Activated CD4-positive, alpha-beta T cell treated with anti-CD3 and anti-CD28 coated beads for 36 hours (primary cell): ENCODE measurements at regions of chr15 and their contacts with region 1.

Region 1: GRCh38 chr15:83011271-83012075 is at the start of gene C15orf40:
- DNase-seq: peak; percentile 88
- ATAC-seq: peak; percentile 81
- H3K4me3 Mint-ChIP-seq: peak within 1 kb of the TSS; percentile 89
- H3K27ac Mint-ChIP-seq: peak within 1 kb of the TSS; percentile 96
- H3K4me1 Mint-ChIP-seq: peaks cover 48% of the 10 kb centered on the region
- H3K27me3 Mint-ChIP-seq: no peaks in the 10 kb centered on the region
- total RNA-seq, gene C15orf40: 20.2 to 23.1 TPM

Region 2: DNA sequence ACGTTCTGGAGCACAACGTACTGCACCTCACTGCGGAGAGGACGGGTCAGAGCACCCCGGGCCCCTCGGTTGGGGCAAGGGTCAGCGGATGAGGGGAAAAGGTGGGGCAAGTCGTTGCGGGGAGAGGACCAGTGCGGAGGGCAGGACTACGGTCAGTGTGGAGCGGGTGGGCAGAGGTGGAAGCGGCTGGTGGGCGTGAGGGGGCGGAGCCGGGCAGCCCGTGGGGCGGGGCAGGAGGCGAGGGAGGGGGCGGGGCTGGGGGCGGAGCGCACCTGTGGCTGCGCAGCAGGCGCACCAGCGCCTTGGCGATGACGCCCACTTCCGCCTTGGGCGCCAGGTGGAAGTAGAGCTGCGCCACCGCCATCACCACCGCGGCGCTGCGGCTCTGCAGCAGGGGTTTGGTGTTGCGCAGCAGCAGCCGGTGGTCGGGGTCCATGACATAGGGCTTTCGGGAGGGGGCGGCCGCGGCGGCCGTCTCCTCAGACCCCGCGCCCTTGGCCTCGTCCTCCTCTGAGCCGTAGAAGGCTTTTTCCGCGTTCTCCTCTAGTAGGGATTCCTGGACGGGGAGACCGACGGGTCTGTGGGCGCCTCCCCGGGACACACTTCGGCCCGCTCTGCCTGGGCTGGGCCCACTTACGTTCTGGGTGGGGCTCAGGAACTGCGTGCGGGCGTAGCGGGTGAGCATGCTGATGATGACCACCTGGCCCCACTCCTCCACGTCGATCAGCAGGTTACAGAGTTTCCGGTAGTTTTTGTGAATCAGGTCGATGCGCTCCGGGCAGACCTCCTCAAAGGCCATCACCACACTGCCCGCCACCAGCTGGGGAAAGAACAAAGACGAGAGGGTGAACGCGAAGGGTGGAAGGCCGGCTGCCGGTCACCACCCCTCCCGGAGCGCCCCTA is 331.0 kb before region 1 on chr15:
- CTCF ChIA-PET with region 1: no interaction called
- POLR2A ChIA-PET with region 1: no interaction called
- intact Hi-C with region 1: loop called in 1 of 2 experiments (anchors 5 kb)
- DNase-seq: peak; percentile 90
- ATAC-seq: peak; percentile 96
- H3K4me3 Mint-ChIP-seq: peak overlapping the region; percentile 80
- H3K27ac Mint-ChIP-seq: peak overlapping the region; percentile 85
- H3K4me1 Mint-ChIP-seq: peaks cover 10% of the 10 kb centered on the region
- H3K27me3 Mint-ChIP-seq: peaks cover 7% of the 10 kb centered on the region

Region 3: GRCh38 chr15:82749951-82750830 is 261.3 kb before region 1 on chr15:
- CTCF ChIA-PET with region 1: interaction called, 10 read pairs
- POLR2A ChIA-PET with region 1: no interaction called
- intact Hi-C with region 1: loop called in 1 of 2 experiments (anchors 2 kb)
- DNase-seq: peak; percentile 91
- ATAC-seq: peak; percentile 95
- H3K4me3 Mint-ChIP-seq: peak overlapping the region; percentile 86
- H3K27ac Mint-ChIP-seq: peak overlapping the region; percentile 98
- H3K4me1 Mint-ChIP-seq: peaks cover 44% of the 10 kb centered on the region
- H3K27me3 Mint-ChIP-seq: no peaks in the 10 kb centered on the region

Region 4: DNA sequence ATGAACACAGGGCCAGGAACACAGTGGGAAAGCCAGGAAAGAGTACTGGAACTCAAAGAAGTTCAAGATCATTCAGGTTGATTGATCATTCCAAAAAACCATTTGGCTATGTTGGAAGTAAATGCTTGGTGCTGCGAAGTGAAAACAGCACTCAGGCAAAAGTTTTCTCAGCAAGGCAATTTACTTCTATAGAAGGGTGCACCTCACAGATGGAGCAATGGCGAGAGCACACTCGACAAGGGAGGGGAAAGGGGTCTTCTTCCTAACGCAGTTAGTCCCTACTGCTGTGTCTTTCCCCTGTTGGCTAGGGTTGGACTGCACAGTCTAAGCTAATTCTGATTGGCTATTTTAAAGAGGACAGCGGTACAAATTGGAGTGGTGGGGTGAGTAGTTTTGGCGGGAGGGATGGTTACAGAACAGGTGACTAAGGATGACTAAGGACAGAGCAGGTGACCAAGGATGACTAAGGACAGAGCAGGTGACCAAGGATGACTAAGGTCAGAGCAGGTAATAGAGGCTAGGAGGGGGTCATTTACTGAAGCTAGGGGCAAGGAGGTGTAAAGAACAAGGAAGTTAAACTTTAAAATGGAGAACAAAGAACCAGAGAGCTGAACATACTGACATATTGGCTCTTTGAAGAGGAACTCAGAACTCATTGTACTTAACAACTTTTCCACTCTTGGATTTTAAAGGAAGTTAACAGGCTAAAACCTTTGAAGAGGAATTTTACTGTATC is 102.2 kb before region 1 on chr15:
- CTCF ChIA-PET with region 1: no interaction called
- POLR2A ChIA-PET with region 1: no interaction called
- intact Hi-C with region 1: no loop called
- DNase-seq: no peak
- ATAC-seq: no peak
- H3K4me3 Mint-ChIP-seq: no peak overlapping the region
- H3K27ac Mint-ChIP-seq: no peak overlapping the region
- H3K4me1 Mint-ChIP-seq: peaks cover 2% of the 10 kb centered on the region
- H3K27me3 Mint-ChIP-seq: peaks cover 13% of the 10 kb centered on the region

Region 5: GRCh38 chr15:82979726-82980125 is 31.7 kb before region 1 on chr15:
- CTCF ChIA-PET with region 1: no interaction called
- POLR2A ChIA-PET with region 1: no interaction called
- intact Hi-C with region 1: no loop called
- DNase-seq: no peak
- ATAC-seq: no peak
- H3K4me3 Mint-ChIP-seq: no peak overlapping the region
- H3K27ac Mint-ChIP-seq: no peak overlapping the region
- H3K4me1 Mint-ChIP-seq: peaks cover 6% of the 10 kb centered on the region
- H3K27me3 Mint-ChIP-seq: no peaks in the 10 kb centered on the region

Region 6: GRCh38 chr15:83066734-83067637 is 55.5 kb after region 1 on chr15 and contains the start of gene BTBD1:
- CTCF ChIA-PET with region 1: interaction called, 7 read pairs
- POLR2A ChIA-PET with region 1: interaction called, 8 read pairs
- intact Hi-C with region 1: loop called (anchors 1 kb)
- DNase-seq: peak; percentile 96
- ATAC-seq: peak; percentile 98
- H3K4me3 Mint-ChIP-seq: peak within 1 kb of the TSS; percentile 79
- H3K27ac Mint-ChIP-seq: peak within 1 kb of the TSS; percentile 86
- H3K4me1 Mint-ChIP-seq: peaks cover 20% of the 10 kb centered on the region
- H3K27me3 Mint-ChIP-seq: no peaks in the 10 kb centered on the region
- total RNA-seq, gene BTBD1: 58.3 to 77.6 TPM

Region 7: DNA sequence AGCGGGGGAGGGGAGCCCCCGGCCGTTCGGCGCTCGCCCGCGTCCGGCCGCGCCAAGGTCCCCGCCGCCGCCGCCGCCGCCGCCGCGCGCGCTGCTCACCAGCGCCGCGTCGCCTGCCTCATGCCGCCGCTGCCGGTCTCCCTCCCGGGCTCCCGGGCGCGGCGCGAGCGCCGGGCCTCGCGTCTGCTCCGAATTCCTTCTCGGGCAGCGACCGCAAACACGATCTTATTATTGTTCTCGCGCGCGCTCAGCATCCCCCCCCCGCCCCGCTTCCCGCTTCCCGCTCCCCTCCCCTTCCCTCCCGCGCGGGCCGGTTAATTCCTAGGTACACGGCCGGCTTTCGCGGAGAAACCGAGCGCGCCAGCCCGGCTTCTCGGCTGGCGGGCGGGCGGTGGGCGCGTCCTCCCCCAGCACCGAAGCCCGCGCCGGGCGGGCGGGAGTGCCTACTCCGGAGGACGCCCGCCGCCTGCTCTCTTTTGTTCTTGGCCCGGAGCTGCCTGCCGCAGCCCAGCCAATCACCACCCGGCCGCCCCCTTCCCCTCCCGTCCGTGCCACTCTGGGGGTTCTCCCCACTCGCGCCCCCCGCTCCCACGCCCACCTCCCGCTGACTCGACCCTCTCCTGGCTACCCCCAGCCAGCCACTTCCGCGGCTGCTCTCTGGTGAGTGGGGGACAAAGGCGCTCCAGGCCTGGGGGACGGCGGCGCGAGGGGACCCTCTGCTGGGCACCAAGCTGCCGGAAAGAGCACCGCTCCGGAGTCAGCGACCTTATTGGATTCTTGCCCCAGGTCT is 196.3 kb after region 1 on chr15 and contains the start of gene HDGFL3:
- CTCF ChIA-PET with region 1: no interaction called
- POLR2A ChIA-PET with region 1: interaction called, 3 read pairs
- intact Hi-C with region 1: loop called (anchors 1 to 5 kb)
- DNase-seq: peak; percentile 50
- ATAC-seq: peak; percentile 60
- H3K4me3 Mint-ChIP-seq: peak within 1 kb of the TSS; percentile 69
- H3K27ac Mint-ChIP-seq: no peak within 1 kb of the TSS
- H3K4me1 Mint-ChIP-seq: peaks cover 9% of the 10 kb centered on the region
- H3K27me3 Mint-ChIP-seq: peaks cover 25% of the 10 kb centered on the region
- total RNA-seq, gene HDGFL3: 5.0 to 7.4 TPM

Region 8: GRCh38 chr15:83436458-83437158 is 425.1 kb after region 1 on chr15:
- CTCF ChIA-PET with region 1: no interaction called
- POLR2A ChIA-PET with region 1: no interaction called
- intact Hi-C with region 1: loop called in 1 of 2 experiments (anchors 2 kb)
- DNase-seq: no peak
- ATAC-seq: no peak
- H3K4me3 Mint-ChIP-seq: no peak overlapping the region
- H3K27ac Mint-ChIP-seq: no peak overlapping the region
- H3K4me1 Mint-ChIP-seq: no peaks in the 10 kb centered on the region
- H3K27me3 Mint-ChIP-seq: peaks cover 15% of the 10 kb centered on the region

Region 9: GRCh38 chr15:83571820-83572707 is 560.6 kb after region 1 on chr15:
- CTCF ChIA-PET with region 1: no interaction called
- POLR2A ChIA-PET with region 1: no interaction called
- intact Hi-C with region 1: loop called in 1 of 2 experiments (anchors 5 kb)
- DNase-seq: no peak
- ATAC-seq: no peak
- H3K4me3 Mint-ChIP-seq: no peak overlapping the region
- H3K27ac Mint-ChIP-seq: no peak overlapping the region
- H3K4me1 Mint-ChIP-seq: no peaks in the 10 kb centered on the region
- H3K27me3 Mint-ChIP-seq: peaks cover 3% of the 10 kb centered on the region